BJ (cell line): ENCODE measurements at regions of chr13 and their contacts with region 1.

Region 1: DNA sequence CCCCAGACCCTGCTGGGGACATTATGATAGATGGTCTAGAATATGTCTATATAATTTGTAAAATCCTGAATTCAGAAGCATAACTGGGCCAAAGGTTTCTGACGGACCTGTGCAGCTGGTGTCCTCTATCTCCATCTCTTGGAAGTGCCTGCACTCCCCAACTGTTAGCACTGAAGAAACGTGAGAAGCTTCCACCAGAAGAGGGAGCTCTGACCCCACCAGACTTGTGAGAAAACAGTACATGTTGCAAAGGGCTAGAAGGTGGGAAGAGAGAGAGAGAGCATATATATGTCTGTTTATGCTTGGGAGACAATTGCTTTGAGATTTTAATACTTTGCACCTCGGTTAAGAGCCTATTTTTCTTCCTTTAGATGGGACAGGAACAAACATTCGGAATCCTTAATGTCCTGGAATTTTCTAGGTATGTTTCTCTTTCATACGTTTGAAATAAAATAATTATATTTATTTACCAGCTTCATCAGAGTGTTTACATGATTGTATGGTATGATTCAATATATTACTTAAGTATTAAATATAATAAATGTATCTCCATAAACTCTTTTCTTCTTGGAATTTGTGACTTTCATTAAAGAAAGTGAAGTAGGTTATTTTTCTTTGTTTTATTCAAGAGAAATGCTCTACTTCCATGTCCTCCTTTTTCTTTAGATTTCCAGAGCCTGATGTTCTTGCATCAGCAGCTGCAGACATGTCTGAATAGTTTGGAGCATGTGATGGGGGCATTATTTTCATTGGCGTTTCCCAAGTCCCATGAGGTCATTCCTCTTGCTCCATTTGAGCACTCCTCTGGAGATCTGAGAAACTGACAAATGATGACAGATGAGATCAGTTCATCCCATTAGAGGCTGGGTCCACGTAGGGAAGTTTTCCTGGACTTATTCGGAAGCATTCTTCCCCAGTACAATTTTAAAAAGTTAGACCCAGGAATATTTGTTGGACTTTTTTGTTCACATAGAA is 202.9 kb downstream of the ATP8A2 start:
- DNase-seq: peak; percentile 4
- H3K4me3 ChIP-seq: no peak overlapping the region
- H3K27me3 ChIP-seq: no peaks in the 10 kb centered on the region; the same call in 1 of the 2 replicates
- CTCF ChIP-seq: peak; percentile 86

Region 2: DNA sequence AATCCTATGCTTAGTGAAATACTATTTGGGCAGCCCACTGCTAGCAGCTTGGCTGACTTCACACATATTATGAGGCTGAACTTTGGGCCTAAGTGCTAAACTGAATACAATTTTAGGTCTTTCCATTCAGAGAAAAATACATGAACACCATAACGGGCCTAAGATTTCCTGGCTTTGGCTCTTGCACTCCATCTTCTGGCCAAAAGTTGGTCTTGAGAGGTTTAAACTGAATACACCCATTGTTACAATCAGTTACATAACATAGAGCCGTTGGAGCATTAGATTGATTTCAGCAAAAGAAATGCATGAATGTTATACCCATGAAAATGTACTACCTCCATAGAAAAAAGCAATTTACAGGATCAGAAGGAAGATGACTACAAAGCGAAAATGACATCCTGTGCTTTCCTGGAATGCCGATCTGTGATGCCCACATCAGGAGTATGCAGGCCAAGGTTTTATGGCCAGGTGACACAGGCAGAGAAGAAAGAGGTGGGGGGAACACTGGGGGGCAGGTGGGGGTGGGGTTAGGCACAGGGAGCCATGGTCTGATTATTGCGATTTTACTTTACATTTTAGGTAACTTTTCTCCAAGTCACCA is 488.2 kb after region 1 on chr13:
- CTCF ChIA-PET with region 1: interaction called, 18 read pairs
- POLR2A ChIA-PET with region 1: interaction called, 3 read pairs
- DNase-seq: no peak
- H3K4me3 ChIP-seq: no peak overlapping the region
- H3K27me3 ChIP-seq: no peaks in the 10 kb centered on the region; the same call in 1 of the 2 replicates
- CTCF ChIP-seq: peak; percentile 72

Region 3: GRCh38 chr13:26074706-26075105 is 500.0 kb after region 1 on chr13:
- CTCF ChIA-PET with region 1: interaction called, 19 read pairs
- POLR2A ChIA-PET with region 1: no interaction called
- DNase-seq: peak; percentile 9
- H3K4me3 ChIP-seq: no peak overlapping the region
- H3K27me3 ChIP-seq: no peaks in the 10 kb centered on the region
- CTCF ChIP-seq: no peak

Region 4: GRCh38 chr13:26168237-26168820 is 593.6 kb after region 1 on chr13:
- CTCF ChIA-PET with region 1: no interaction called
- POLR2A ChIA-PET with region 1: no interaction called
- DNase-seq: no peak
- H3K4me3 ChIP-seq: no peak overlapping the region
- H3K27me3 ChIP-seq: no peaks in the 10 kb centered on the region
- CTCF ChIP-seq: no peak